Activated CD4-positive, alpha-beta T cell treated with anti-CD3 and anti-CD28 coated beads, Interleukin-2, amount 10 ng/mL, durations not matched to agents 24 days and 14 days (primary cell): ENCODE measurements at regions of chr20 and their contacts with region 1.

Region 1: GRCh38 chr20:19995220-19995863 is 21.8 kb upstream of the NAA20 start:
- DNase-seq: peak; percentile 69
- H3K4me3 Mint-ChIP-seq: no peak overlapping the region
- H3K27ac Mint-ChIP-seq: no peak overlapping the region
- H3K4me1 Mint-ChIP-seq: no peaks in the 10 kb centered on the region
- H3K27me3 Mint-ChIP-seq: peaks cover 5% of the 10 kb centered on the region

Region 2: DNA sequence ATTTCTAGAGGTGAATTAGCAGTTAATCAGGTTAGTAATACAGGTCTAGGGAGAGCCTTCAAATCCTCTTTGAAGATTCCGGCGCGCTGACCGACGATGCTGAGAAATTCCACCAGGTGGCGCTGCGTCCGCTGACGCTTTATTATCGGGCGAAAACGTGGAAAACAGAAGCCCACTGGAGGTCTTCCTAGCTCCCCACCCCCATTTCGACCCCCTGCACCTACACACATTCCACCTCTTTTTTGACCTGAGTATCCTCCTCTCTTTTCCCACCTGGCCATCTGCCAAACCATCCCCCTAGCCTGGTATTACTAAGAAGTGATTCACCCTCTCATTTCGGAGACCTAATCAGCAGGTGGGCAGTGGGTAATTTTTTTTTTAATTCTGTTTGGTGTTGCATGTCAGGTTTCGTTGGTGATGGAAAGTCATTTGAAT is 302.6 kb before region 1 on chr20:
- intact Hi-C with region 1: loop called (anchors 2 kb)
- DNase-seq: peak; percentile 83
- H3K4me3 Mint-ChIP-seq: no peak overlapping the region
- H3K27ac Mint-ChIP-seq: no peak overlapping the region
- H3K4me1 Mint-ChIP-seq: peaks cover 2% of the 10 kb centered on the region
- H3K27me3 Mint-ChIP-seq: peaks cover 2% of the 10 kb centered on the region

Region 3: DNA sequence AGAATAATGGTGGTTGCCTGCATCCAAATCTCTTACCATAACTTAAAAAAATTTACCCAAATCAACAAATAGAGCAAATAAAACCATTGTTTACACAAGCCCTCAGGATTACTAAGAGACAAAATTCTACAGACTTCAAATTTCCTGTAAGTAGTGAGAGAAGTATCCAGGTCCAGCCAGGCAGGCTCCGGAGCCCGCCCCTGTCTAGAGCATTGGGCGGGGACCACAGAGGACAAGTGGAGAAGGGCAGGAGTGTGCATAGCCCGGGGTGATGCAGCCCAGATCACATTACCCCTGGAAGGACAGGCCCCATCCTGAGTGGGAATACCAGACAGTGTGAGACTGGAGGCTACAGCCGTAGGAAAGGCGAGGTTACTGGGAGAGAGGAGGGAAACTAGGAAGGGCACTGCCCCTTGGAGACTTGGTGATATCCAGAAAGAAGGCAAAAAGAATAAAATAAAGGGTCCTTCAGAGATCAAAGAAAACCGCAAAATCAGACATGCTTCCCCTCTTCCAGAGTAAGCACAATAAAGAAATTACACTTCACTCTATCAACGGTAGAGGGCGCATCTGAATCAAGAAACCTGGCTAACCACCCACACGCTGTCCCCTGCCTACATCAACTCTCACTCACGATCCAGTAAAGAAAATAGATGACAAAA is 210.7 kb before region 1 on chr20:
- intact Hi-C with region 1: loop called (anchors 1 kb)
- DNase-seq: peak; percentile 68
- H3K4me3 Mint-ChIP-seq: no peak overlapping the region
- H3K27ac Mint-ChIP-seq: no peak overlapping the region
- H3K4me1 Mint-ChIP-seq: peaks cover 4% of the 10 kb centered on the region
- H3K27me3 Mint-ChIP-seq: peaks cover 3% of the 10 kb centered on the region